Naive thymus-derived CD8-positive, alpha-beta T cell (primary cell): ENCODE measurements at regions of chr2 and their contacts with region 1.

Region 1: GRCh38 chr2:64750817-64751285 is 97.1 kb upstream of the SERTAD2 start:
- DNase-seq: peak; percentile 92 to 99 (median 97)
- ATAC-seq: peak; percentile 83 to 86
- H3K4me3 Mint-ChIP-seq: peak overlapping the region; percentile 88 to 100 (median 98)
- H3K27ac Mint-ChIP-seq: peak overlapping the region; percentile 91 to 99 (median 96)
- H3K4me1 Mint-ChIP-seq: peaks cover 12 to 29% (median 25%) of the 10 kb centered on the region in 4 donors
- H3K27me3 Mint-ChIP-seq: no peaks in the 10 kb centered on the region

Region 2: DNA sequence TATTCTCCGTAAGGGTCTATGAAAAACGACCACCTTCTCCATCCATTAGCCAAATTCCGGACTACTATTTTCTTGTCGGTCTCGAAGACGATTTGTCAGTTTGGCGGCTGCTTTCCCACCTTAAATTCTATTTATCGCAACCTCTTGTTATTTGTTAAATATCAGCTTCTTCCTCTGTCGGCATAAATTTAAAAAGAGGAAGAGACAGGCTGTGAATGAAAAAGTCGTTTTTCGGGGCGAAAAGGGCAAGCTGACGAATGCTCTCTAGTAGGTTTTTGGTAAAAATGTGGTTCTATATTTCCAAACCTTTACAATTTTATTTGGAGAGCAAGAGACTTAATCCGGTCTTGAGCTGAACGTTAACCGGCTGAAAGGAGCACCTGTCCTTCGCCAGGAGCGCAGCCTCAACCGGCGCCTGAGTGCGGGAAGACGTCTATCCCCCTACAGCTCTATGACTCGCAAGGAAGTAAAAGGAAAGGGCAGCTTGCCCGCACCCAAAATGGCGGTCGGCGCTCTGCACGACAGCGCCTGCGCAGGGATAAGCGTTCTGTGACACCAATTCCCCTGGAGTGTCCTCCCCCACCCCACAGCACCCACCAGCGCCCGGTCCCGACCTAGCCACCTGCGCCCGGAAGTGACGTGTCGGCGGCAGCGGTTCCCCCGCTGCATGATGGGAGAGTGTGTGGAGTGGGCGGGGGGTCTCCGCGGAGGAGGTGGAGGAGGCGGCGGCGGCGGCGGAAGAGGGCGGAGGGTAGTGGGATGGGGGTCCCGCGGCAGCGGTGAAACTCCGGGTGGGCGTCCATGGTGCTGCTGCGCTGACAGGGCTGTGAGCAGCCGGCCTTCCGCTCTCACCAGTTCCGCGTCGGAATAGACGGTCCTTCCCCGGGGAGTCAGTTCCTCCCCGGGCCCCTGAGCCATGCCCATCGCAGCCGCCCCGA is 226.9 kb before region 1 on chr2 and contains the start of gene AFTPH:
- POLR2A ChIA-PET with region 1: interaction called, 12 read pairs
- DNase-seq: peak; percentile 92 to 100 (median 100)
- ATAC-seq: peak; percentile 87 to 92
- H3K4me3 Mint-ChIP-seq: peak within 1 kb of the TSS; percentile 94 to 100 (median 99)
- H3K27ac Mint-ChIP-seq: peak within 1 kb of the TSS; percentile 95 to 99 (median 99)
- H3K4me1 Mint-ChIP-seq: peaks cover 22 to 42% (median 40%) of the 10 kb centered on the region in 4 donors
- H3K27me3 Mint-ChIP-seq: no peaks in the 10 kb centered on the region
- polyA plus RNA-seq, gene AFTPH: 20.9 to 23.6 (median 22.5) TPM

Region 3: GRCh38 chr2:64644177-64645004 is 106.5 kb before region 1 on chr2:
- POLR2A ChIA-PET with region 1: interaction called, 64 read pairs
- DNase-seq: peak; percentile 40 to 76 (median 64)
- ATAC-seq: peak; percentile 71 to 81
- H3K4me3 Mint-ChIP-seq: peak overlapping the region; percentile 81 to 96 (median 91)
- H3K27ac Mint-ChIP-seq: peak overlapping the region; percentile 88 to 97 (median 94)
- H3K4me1 Mint-ChIP-seq: peaks cover 31 to 97% (median 89%) of the 10 kb centered on the region in 4 donors
- H3K27me3 Mint-ChIP-seq: no peaks in the 10 kb centered on the region

Region 4: GRCh38 chr2:64704161-64704560 is 46.7 kb before region 1 on chr2:
- POLR2A ChIA-PET with region 1: no interaction called
- DNase-seq: no peak
- ATAC-seq: no peak
- H3K4me3 Mint-ChIP-seq: no peak overlapping the region
- H3K27ac Mint-ChIP-seq: no peak overlapping the region
- H3K4me1 Mint-ChIP-seq: peaks cover 1 to 12% (median 8%) of the 10 kb centered on the region in 4 donors
- H3K27me3 Mint-ChIP-seq: no peaks in the 10 kb centered on the region

Region 5: GRCh38 chr2:64718250-64718885 is 32.5 kb before region 1 on chr2:
- POLR2A ChIA-PET with region 1: no interaction called
- DNase-seq: no peak
- ATAC-seq: no peak
- H3K4me3 Mint-ChIP-seq: no peak overlapping the region
- H3K27ac Mint-ChIP-seq: peak overlapping the region in 2 of 10 donors; percentile 46 to 63
- H3K4me1 Mint-ChIP-seq: peaks cover 9 to 13% (median 10%) of the 10 kb centered on the region in 4 donors
- H3K27me3 Mint-ChIP-seq: no peaks in the 10 kb centered on the region

Region 6: GRCh38 chr2:64730551-64731262 is 20.1 kb before region 1 on chr2:
- POLR2A ChIA-PET with region 1: interaction called, 51 read pairs
- DNase-seq: peak; percentile 17 to 67 (median 48)
- ATAC-seq: peak; percentile 86
- H3K4me3 Mint-ChIP-seq: peak overlapping the region; percentile 80 to 93 (median 90)
- H3K27ac Mint-ChIP-seq: peak overlapping the region; percentile 95 to 100 (median 98)
- H3K4me1 Mint-ChIP-seq: peaks cover 25 to 62% (median 53%) of the 10 kb centered on the region in 4 donors
- H3K27me3 Mint-ChIP-seq: no peaks in the 10 kb centered on the region

Region 7: GRCh38 chr2:64767670-64768468 is 17.0 kb after region 1 on chr2:
- POLR2A ChIA-PET with region 1: interaction called, 35 read pairs
- DNase-seq: peak; percentile 51 to 85 (median 57)
- ATAC-seq: peak; percentile 73 to 75
- H3K4me3 Mint-ChIP-seq: peak overlapping the region; percentile 92 to 99 (median 94)
- H3K27ac Mint-ChIP-seq: peak overlapping the region; percentile 90 to 99 (median 96)
- H3K4me1 Mint-ChIP-seq: peaks cover 11 to 26% (median 17%) of the 10 kb centered on the region in 4 donors
- H3K27me3 Mint-ChIP-seq: no peaks in the 10 kb centered on the region

Region 8: GRCh38 chr2:64831134-64831976 is 80.5 kb after region 1 on chr2:
- POLR2A ChIA-PET with region 1: interaction called, 23 read pairs
- DNase-seq: peak; percentile 57 to 91 (median 78)
- ATAC-seq: peak; percentile 95 to 96
- H3K4me3 Mint-ChIP-seq: peak overlapping the region in 5 of 10 donors; percentile 17 to 50 (median 33)
- H3K27ac Mint-ChIP-seq: peak overlapping the region in 6 of 10 donors; percentile 19 to 56 (median 40)
- H3K4me1 Mint-ChIP-seq: peaks cover 0 to 17% (median 5%) of the 10 kb centered on the region in 4 donors
- H3K27me3 Mint-ChIP-seq: peaks cover 0 to 7% (median 0%) of the 10 kb centered on the region in 5 donors